CD8-positive, alpha-beta T cell (primary cell): ENCODE measurements at regions of chr1 and their contacts with region 1.

Region 1: GRCh38 chr1:175208773-175209492 is 16.4 kb upstream of the KIAA0040 start:
- DNase-seq: peak; percentile 10 to 87 (median 61)
- ATAC-seq: peak; percentile 87
- H3K4me3 ChIP-seq: peak overlapping the region; percentile 26 to 36
- H3K4me3 Mint-ChIP-seq: peak overlapping the region; percentile 82
- H3K27ac ChIP-seq: peak overlapping the region; percentile 41 to 78
- H3K27ac Mint-ChIP-seq: peak overlapping the region; percentile 95
- H3K4me1 ChIP-seq: peaks cover 55% of the 10 kb centered on the region
- H3K4me1 Mint-ChIP-seq: peaks cover 77% of the 10 kb centered on the region
- H3K27me3 ChIP-seq: no peaks in the 10 kb centered on the region
- H3K27me3 Mint-ChIP-seq: no peaks in the 10 kb centered on the region
- CTCF ChIP-seq: no peak

Region 2: DNA sequence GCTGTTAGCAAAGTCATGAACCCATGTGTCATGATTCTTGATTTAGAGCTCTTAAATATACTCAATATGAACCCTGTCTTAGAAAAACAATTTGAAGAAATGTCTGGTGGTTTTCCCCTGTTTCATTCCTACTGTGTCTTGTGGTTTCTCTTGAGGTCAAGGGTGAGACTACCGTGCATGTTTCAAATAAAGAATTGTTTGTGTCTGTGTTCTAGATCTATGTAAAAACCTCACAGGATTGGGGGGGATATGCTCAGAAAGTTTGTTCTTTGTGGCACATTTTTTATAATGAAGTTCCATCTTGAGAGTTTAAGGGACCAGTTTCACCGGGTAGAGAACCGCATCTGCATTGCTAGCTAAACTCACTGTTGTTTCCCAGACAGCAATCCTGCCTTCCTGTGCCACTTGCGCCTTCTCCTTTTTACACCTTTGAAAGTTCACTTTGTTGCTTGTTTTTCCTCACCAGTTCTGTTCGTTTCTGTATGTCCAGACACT is 240.1 kb before region 1 on chr1:
- CTCF ChIA-PET with region 1: no interaction called
- POLR2A ChIA-PET with region 1: no interaction called
- intact Hi-C with region 1: no loop called
- DNase-seq: peak in 6 of 9 experiments; percentile 27 to 92 (median 53)
- ATAC-seq: peak; percentile 48
- H3K4me3 ChIP-seq: peak overlapping the region; percentile 2 to 16
- H3K4me3 Mint-ChIP-seq: peak overlapping the region; percentile 77
- H3K27ac ChIP-seq: peak overlapping the region; percentile 59 to 89
- H3K27ac Mint-ChIP-seq: peak overlapping the region; percentile 98
- H3K4me1 ChIP-seq: peaks cover 73% of the 10 kb centered on the region
- H3K4me1 Mint-ChIP-seq: peaks cover 76% of the 10 kb centered on the region
- H3K27me3 ChIP-seq: no peaks in the 10 kb centered on the region
- H3K27me3 Mint-ChIP-seq: no peaks in the 10 kb centered on the region
- CTCF ChIP-seq: no peak

Region 3: DNA sequence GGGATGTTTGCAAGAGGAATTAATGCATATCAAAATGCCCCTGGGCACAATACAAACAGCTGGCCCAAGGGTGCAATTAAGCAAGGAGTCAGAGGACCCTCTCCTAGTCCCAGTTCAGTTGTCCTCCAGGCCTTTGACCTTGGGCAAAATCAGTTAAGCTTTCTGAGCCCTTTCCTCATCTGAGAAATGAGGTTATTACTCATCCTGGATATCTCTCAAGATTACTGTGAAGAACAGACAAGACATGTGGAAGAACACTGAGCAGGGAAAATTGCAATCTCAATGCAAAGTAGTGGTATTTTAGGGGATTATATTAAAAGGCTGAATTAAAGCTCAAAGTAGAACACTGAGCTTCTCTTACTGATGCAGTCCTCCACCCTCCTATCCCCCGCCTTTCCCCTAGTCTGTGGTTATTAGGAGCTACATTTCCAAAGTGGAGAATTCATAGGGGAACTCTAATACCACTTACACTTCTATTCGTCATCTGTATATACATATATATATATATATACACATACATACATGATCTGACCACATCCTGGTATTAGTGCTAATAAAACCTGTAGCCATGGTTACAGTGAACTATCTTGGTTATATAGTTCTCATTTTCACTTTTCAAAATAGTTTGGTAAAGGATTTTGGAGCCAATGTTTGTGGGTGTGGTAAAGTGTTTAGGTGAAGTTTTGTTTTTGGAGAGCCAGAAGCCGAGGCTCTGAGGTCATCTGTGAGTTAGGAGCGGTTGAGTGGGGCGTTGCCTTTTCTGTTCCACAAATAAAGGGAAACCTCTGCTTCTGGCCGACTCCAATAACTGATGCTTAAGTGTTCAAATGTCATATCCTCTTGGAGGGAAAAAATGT is 34.4 kb before region 1 on chr1:
- CTCF ChIA-PET with region 1: interaction called, 4 read pairs
- POLR2A ChIA-PET with region 1: no interaction called
- intact Hi-C with region 1: loop called in 1 of 2 experiments (anchors 5 kb)
- DNase-seq: peak in 2 of 9 experiments; percentile 31 to 64
- ATAC-seq: no peak
- H3K4me3 ChIP-seq: no peak overlapping the region
- H3K4me3 Mint-ChIP-seq: no peak overlapping the region
- H3K27ac ChIP-seq: peak overlapping the region in 1 of 2 experiments; percentile 1
- H3K27ac Mint-ChIP-seq: peak overlapping the region; percentile 50
- H3K4me1 ChIP-seq: peaks cover 4% of the 10 kb centered on the region
- H3K4me1 Mint-ChIP-seq: peaks cover 81% of the 10 kb centered on the region
- H3K27me3 ChIP-seq: no peaks in the 10 kb centered on the region
- H3K27me3 Mint-ChIP-seq: no peaks in the 10 kb centered on the region
- CTCF ChIP-seq: no peak

Region 4: GRCh38 chr1:175192630-175193526 is 16.1 kb before region 1 on chr1 and contains the start of gene KIAA0040:
- CTCF ChIA-PET with region 1: interaction called, 8 read pairs
- POLR2A ChIA-PET with region 1: interaction called, 33 read pairs
- intact Hi-C with region 1: loop called (anchors 1 to 2 kb)
- DNase-seq: peak in 8 of 9 experiments; percentile 27 to 82 (median 56)
- ATAC-seq: peak; percentile 65
- H3K4me3 ChIP-seq: peak within 1 kb of the TSS; percentile 78 to 96
- H3K4me3 Mint-ChIP-seq: peak within 1 kb of the TSS; percentile 91
- H3K27ac ChIP-seq: peak within 1 kb of the TSS; percentile 64 to 84
- H3K27ac Mint-ChIP-seq: peak within 1 kb of the TSS; percentile 88
- H3K4me1 ChIP-seq: peaks cover 48% of the 10 kb centered on the region
- H3K4me1 Mint-ChIP-seq: peaks cover 60% of the 10 kb centered on the region
- H3K27me3 ChIP-seq: no peaks in the 10 kb centered on the region
- H3K27me3 Mint-ChIP-seq: no peaks in the 10 kb centered on the region
- CTCF ChIP-seq: no peak
- total RNA-seq, gene KIAA0040: 8.7 to 9.6 TPM

Region 5: GRCh38 chr1:175297291-175297690 is 88.4 kb after region 1 on chr1:
- CTCF ChIA-PET with region 1: no interaction called
- POLR2A ChIA-PET with region 1: interaction called, 3 read pairs
- intact Hi-C with region 1: loop called in 1 of 2 experiments (anchors 5 kb)
- DNase-seq: peak in 2 of 9 experiments; percentile 17 to 52
- ATAC-seq: peak; percentile 72
- H3K4me3 ChIP-seq: no peak overlapping the region
- H3K4me3 Mint-ChIP-seq: no peak overlapping the region
- H3K27ac ChIP-seq: no peak overlapping the region
- H3K27ac Mint-ChIP-seq: no peak overlapping the region
- H3K4me1 ChIP-seq: peaks cover 28% of the 10 kb centered on the region
- H3K4me1 Mint-ChIP-seq: peaks cover 36% of the 10 kb centered on the region
- H3K27me3 ChIP-seq: no peaks in the 10 kb centered on the region
- H3K27me3 Mint-ChIP-seq: peaks cover 14% of the 10 kb centered on the region
- CTCF ChIP-seq: no peak